Heart right ventricle (tissue), 16 donors: ENCODE measurements at regions of chr13 and their contacts with region 1.

Region 1: GRCh38 chr13:21435710-21436151 is 23.4 kb downstream of the ZDHHC20 start:
- DNase-seq: peak; percentile 45 to 70
- ATAC-seq: peak; percentile 84 to 100 (median 99)
- H3K4me3 ChIP-seq: peak overlapping the region in 3 of 10 donors; percentile 4 to 30 (median 18)
- H3K27ac ChIP-seq: peak overlapping the region; percentile 42 to 87 (median 75)
- H3K4me1 ChIP-seq: peaks cover 0 to 57% (median 20%) of the 10 kb centered on the region in 9 donors
- H3K27me3 ChIP-seq: no peaks in the 10 kb centered on the region
- CTCF ChIP-seq: no peak

Region 2: GRCh38 chr13:21458813-21459701 is 23.3 kb after region 1 on chr13 and contains the start of gene ZDHHC20:
- intact Hi-C with region 1: loop called in 2 of 10 experiments (anchors 2 kb)
- DNase-seq: peak; percentile 87 to 96
- ATAC-seq: peak; percentile 95 to 98 (median 98)
- H3K4me3 ChIP-seq: peak within 1 kb of the TSS; percentile 72 to 100 (median 96)
- H3K27ac ChIP-seq: peak within 1 kb of the TSS; percentile 81 to 99 (median 94)
- H3K4me1 ChIP-seq: peaks cover 4 to 37% (median 17%) of the 10 kb centered on the region in 9 donors
- H3K27me3 ChIP-seq: no peaks in the 10 kb centered on the region
- CTCF ChIP-seq: peak in 2 of 9 donors; percentile 8 to 9
- total RNA-seq, gene ZDHHC20: 11.4 to 28.5 (median 14.8) TPM

Region 3: DNA sequence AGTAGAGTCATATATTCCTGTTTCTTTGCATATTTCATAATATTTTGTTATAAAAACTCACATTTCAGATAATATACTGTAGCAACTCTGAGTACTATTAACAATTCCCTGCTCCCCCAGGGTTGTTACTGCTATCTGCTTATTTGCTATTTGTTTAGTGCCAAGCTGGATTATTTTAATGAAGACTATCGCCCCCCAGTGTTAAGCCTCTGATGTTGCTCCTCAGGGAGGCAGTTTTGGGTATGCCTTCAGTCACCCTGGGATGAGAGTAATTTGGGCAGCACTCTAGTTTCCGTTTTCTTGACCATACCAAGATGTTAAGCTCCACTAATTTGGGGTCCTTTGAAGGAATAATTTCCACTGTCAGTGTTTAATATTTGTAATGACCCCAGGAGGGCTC is 122.3 kb after region 1 on chr13:
- intact Hi-C with region 1: no loop called
- DNase-seq: no peak
- ATAC-seq: peak in 2 of 8 donors; percentile 35 to 53
- H3K4me3 ChIP-seq: no peak overlapping the region
- H3K27ac ChIP-seq: no peak overlapping the region
- H3K4me1 ChIP-seq: peaks cover 0 to 6% (median 0%) of the 10 kb centered on the region in 9 donors
- H3K27me3 ChIP-seq: no peaks in the 10 kb centered on the region
- CTCF ChIP-seq: peak in 8 of 9 donors; percentile 7 to 52 (median 41)